Naive thymus-derived CD4-positive, alpha-beta T cell (primary cell): ENCODE measurements at regions of chr19 and their contacts with region 1.

Region 1: GRCh38 chr19:29596885-29597525 is 9.1 kb upstream of the POP4 start:
- DNase-seq: no peak
- ATAC-seq: no peak
- H3K4me3 ChIP-seq: no peak overlapping the region
- H3K4me3 Mint-ChIP-seq: peak overlapping the region in 1 of 10 donors; percentile 10
- H3K27ac ChIP-seq: no peak overlapping the region
- H3K27ac Mint-ChIP-seq: peak overlapping the region in 2 of 9 donors; percentile 12 to 57
- H3K4me1 ChIP-seq: no peaks in the 10 kb centered on the region
- H3K4me1 Mint-ChIP-seq: peaks cover 0 to 4% (median 0%) of the 10 kb centered on the region in 7 donors
- H3K27me3 ChIP-seq: no peaks in the 10 kb centered on the region
- H3K27me3 Mint-ChIP-seq: peaks cover 11 to 26% (median 20%) of the 10 kb centered on the region in 5 donors

Region 2: GRCh38 chr19:29467824-29468401 is 129.1 kb before region 1 on chr19:
- CTCF ChIA-PET with region 1: no interaction called
- POLR2A ChIA-PET with region 1: no interaction called
- intact Hi-C with region 1: loop called in 1 of 2 experiments (anchors 5 kb)
- DNase-seq: peak in 2 of 9 donors; percentile 0 to 13
- ATAC-seq: no peak
- H3K4me3 ChIP-seq: no peak overlapping the region
- H3K4me3 Mint-ChIP-seq: no peak overlapping the region
- H3K27ac ChIP-seq: no peak overlapping the region
- H3K27ac Mint-ChIP-seq: no peak overlapping the region
- H3K4me1 ChIP-seq: no peaks in the 10 kb centered on the region
- H3K4me1 Mint-ChIP-seq: peaks cover 0 to 5% (median 0%) of the 10 kb centered on the region in 7 donors
- H3K27me3 ChIP-seq: no peaks in the 10 kb centered on the region
- H3K27me3 Mint-ChIP-seq: peaks cover 13 to 44% (median 24%) of the 10 kb centered on the region in 5 donors